Sciatic nerve (tissue), 2 donors: ENCODE measurements at regions of chr12 and their contacts with region 1.

Region 1: GRCh38 chr12:123024819-123025391 is 44.4 kb downstream of the ARL6IP4 start:
- DNase-seq: no peak
- ATAC-seq: no peak

Region 2: GRCh38 chr12:122752464-122753318 is 272.2 kb before region 1 on chr12 and contains the start of gene DENR:
- intact Hi-C with region 1: no loop called
- DNase-seq: peak; percentile 99
- ATAC-seq: peak; percentile 99
- total RNA-seq, gene DENR: 32.7 TPM

Region 3: DNA sequence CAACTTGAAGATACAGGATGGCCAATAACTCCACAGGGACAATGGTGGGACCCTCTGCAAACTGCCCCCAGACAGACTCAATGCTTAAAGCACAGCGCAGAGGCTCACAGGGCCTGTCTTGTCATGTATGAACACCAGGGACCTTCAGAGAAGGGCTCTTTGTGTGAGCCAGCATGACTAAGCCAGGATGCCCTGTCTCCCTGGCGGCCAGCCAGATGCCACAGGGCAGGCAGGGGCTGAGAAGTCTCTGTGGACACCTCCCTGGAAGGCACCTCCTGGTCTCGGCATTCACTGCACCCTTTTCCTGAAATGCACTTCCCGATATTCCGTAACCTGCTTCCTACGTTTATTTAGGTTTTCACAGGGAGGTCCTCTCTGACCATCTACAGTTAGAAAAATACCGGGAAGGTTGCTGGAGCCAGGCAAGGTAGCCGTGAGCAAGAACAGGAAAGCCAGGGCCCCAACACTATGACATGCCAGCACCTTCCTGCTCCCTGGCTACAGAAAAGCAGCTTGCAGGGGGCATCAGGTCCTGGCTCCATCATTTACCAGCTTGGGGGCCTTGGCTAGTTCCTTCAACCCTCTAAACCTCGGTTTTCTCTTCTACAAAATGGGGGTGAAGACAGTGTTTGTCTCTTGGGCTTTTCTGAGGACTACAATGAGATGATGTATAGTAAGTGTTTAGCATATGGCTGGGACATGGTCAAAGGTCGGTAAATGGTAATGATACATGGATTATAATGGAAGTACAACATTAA is 61.0 kb after region 1 on chr12:
- intact Hi-C with region 1: loop called (anchors 1 kb)
- DNase-seq: no peak
- ATAC-seq: no peak